Right ventricle myocardium inferior (tissue), 1 donor: ENCODE measurements at regions of chr3 and their contacts with region 1.

Region 1: DNA sequence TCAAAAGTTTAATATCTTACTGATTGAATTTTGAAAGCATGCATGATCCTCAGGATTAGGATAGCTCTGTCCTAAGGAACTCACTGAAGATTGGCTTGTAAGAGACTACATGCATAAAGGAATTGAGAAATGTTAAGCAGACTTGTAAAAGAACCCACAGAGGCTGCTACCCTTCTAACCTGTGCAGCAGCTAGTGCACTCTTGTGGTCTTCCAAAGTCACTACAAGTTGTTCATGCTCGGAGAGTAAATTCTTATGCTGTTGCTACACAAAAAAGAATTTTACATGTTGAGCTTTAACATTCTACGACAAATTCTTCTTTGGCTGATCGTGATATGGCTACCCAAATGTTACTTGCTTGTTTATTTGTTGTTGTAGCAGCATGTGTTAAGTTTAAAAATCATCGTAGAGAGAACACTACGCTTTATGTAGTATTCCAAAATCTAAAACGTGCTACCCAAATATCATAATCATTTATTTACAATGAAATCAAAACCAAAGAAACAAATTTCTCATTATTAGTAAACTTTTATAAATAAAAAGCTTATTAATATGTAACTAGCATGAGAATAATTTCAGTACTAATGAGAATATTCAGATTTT is 55.0 kb downstream of the GOLIM4 start:
- DNase-seq: no peak
- ATAC-seq: peak; percentile 71

Region 2: DNA sequence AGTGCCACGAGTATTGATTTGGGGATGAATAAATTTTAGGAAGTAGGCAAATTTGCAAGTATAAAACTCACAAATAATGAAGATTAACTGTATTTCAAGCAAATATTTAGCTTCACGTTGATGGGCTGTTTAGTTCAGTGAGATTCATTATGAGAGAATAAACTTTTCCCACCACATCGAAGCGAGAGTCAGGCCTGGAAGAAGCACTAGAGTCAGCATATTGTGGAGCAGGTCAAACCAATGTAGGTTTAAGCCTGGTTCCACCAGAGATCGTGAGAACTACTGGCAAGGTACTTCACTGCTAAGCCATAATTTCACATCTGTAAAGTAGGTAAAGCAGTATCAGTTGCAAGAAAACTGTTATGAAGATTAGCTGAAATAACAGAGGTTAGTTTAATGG is 409.2 kb before region 1 on chr3:
- intact Hi-C with region 1: no loop called
- DNase-seq: no peak
- ATAC-seq: no peak

Region 3: GRCh38 chr3:167754049-167754448 is 286.7 kb before region 1 on chr3:
- intact Hi-C with region 1: no loop called
- DNase-seq: no peak
- ATAC-seq: no peak

Region 4: GRCh38 chr3:167837466-167837865 is 203.2 kb before region 1 on chr3:
- intact Hi-C with region 1: loop called (anchors 5 kb)
- DNase-seq: no peak
- ATAC-seq: no peak

Region 5: GRCh38 chr3:167928381-167928780 is 112.3 kb before region 1 on chr3:
- intact Hi-C with region 1: loop called (anchors 1 kb)
- DNase-seq: no peak
- ATAC-seq: no peak

Region 6: DNA sequence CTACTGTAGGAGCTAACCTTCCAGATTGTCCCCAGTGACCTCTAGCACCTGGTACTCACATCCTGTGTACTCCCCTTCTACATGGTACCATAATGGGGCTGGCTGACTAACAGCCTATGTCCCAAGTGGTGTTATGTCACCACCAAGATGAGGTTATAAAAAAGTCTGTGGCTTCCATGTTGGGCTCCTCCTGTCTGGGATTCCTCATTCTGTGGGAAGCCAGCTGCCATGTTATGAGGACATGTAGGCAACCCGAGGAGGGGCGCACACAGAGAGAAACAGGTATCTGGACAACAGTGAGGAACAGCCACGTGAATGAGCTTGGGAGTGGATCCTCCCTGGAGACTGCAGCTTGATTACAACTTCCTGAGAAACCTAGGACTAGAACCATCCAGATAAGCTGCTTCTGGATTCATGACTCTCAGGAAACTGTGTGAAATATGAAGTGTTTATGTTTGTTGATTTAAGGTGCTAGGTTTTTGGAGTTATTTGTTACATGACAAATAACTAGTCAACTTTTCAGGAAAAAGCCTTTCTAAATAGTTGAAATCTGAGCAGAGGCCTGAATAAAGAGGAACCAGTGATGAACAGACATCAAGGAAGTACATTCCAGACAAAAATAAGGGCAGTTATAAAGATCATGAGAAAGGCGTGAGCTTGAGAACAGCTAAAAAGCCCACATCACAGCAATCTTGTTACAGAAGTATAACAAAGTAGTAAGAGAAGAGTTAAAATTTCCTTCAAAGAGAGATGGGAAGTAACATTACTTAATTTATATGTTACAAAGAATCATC is 33.3 kb after region 1 on chr3:
- intact Hi-C with region 1: no loop called
- DNase-seq: no peak
- ATAC-seq: peak; percentile 31

Region 7: GRCh38 chr3:168116279-168116678 is 75.6 kb after region 1 on chr3:
- intact Hi-C with region 1: no loop called
- DNase-seq: peak; percentile 65
- ATAC-seq: peak; percentile 91